Body of pancreas (tissue), 4 donors: ENCODE measurements at regions of chr20 and their contacts with region 1.

Region 1: DNA sequence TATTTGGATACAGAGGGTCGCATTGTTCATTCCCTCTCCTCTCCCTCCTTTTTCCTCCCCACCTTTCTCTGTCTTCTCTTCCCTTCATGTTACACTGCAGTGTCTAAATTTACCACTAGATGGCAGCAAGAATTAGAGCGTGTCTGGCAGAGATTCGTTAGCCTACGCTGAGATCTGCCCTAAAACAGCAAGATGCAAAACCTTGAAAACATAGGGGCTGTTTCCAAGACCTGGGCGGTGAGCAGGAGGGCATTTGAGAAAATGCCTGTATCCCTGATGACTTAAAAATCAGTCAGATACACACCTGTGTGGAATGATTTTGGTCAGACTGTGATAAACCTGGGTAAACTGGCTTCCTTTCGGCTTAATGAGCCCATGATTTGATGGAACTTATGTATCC is 101.5 kb upstream of the ISM1 start:
- DNase-seq: peak; percentile 31 to 46 (median 36)
- ATAC-seq: peak; percentile 78
- H3K4me3 ChIP-seq: no peak overlapping the region
- H3K27ac ChIP-seq: no peak overlapping the region
- H3K4me1 ChIP-seq: no peaks in the 10 kb centered on the region
- H3K27me3 ChIP-seq: no peaks in the 10 kb centered on the region
- CTCF ChIP-seq: peak; percentile 40 to 94 (median 89)
- POLR2A ChIP-seq: no peak

Region 2: DNA sequence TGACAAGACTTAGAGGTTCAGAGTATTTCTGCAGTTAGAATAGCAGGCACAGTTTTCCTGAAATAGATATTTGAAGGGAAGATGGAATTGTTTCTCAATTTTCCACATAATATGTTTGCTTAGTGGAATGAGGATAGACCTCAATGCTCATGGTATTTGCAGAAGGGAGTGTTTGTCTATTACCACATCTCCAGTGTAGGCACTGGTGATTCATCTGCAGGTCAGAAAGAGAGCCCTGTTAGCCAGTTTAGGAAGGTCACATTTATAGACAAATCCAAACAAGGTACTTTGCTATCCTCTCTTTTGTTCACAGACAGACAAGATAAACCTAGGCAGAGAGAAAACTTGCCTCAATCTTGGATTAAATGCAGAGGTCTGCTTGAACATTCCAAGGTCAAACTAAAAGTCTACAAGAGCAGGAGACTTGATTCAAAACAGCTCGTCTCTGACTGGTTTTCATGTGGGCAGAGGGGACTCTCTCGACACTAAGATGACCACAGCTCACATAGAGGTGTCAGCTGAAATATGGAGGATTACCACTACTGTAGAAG is 124.3 kb after region 1 on chr20:
- intact Hi-C with region 1: no loop called
- DNase-seq: no peak
- ATAC-seq: no peak
- H3K4me3 ChIP-seq: no peak overlapping the region
- H3K27ac ChIP-seq: no peak overlapping the region
- H3K4me1 ChIP-seq: peaks cover under 1% of the 10 kb centered on the region
- H3K27me3 ChIP-seq: no peaks in the 10 kb centered on the region
- CTCF ChIP-seq: no peak
- POLR2A ChIP-seq: no peak

Region 3: GRCh38 chr20:13261460-13262301 is 142.1 kb after region 1 on chr20:
- intact Hi-C with region 1: loop called (anchors 5 kb)
- DNase-seq: peak; percentile 80 to 88 (median 81)
- ATAC-seq: peak; percentile 66
- H3K4me3 ChIP-seq: no peak overlapping the region
- H3K27ac ChIP-seq: peak overlapping the region in 3 of 4 donors; percentile 68 to 78 (median 77)
- H3K4me1 ChIP-seq: peaks cover 43% of the 10 kb centered on the region
- H3K27me3 ChIP-seq: no peaks in the 10 kb centered on the region
- CTCF ChIP-seq: peak; percentile 55 to 84 (median 78)
- POLR2A ChIP-seq: no peak